WTC11 (cell line): ENCODE measurements at regions of chr3 and their contacts with region 1.

Region 1: GRCh38 chr3:113838631-113839209 is at the start of gene GRAMD1C:
- DNase-seq: peak; percentile 90
- ATAC-seq: peak; percentile 98
- H3K4me3 Mint-ChIP-seq: peak within 1 kb of the TSS; percentile 84
- H3K27ac Mint-ChIP-seq: peak within 1 kb of the TSS; percentile 29; the same call in 1 of the 2 replicates
- H3K4me1 Mint-ChIP-seq: peaks cover 14% of the 10 kb centered on the region
- H3K27me3 Mint-ChIP-seq: peaks cover 3% of the 10 kb centered on the region; the same call in 1 of the 2 replicates
- CTCF ChIP-seq: peak; percentile 82
- total RNA-seq, gene GRAMD1C: 2.6 to 3.5 TPM (median 2.8 TPM) in 3 replicates

Region 2: DNA sequence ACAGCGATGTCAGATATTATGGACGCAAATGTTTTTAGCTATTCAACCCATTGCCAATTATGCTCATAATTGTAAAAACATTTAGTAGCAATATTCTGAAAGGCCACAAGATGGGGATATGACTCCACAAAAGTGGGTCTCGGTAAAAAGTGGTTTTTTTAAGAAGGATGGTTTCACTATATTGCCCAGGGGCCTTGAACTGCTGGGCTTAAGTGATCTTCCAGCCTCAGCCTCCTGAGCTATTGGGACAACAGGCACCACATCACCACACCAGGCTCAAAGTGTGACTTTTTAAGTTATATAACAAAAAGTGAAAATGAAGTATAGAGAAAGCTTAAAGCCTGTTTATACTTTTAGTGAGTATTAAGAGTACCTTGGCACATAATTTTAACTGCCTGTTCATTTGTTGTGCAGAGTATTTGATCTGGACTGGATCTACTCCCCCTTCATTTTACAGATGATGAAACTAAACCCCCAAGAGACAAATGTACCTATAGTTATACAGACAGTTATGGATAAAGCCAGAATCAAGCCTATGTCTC is 102.1 kb before region 1 on chr3:
- CTCF ChIA-PET with region 1: interaction called, 11 read pairs
- POLR2A ChIA-PET with region 1: no interaction called
- DNase-seq: no peak
- ATAC-seq: peak; percentile 72
- H3K4me3 Mint-ChIP-seq: no peak overlapping the region
- H3K27ac Mint-ChIP-seq: peak overlapping the region; percentile 85
- H3K4me1 Mint-ChIP-seq: peaks cover 78% of the 10 kb centered on the region
- H3K27me3 Mint-ChIP-seq: no peaks in the 10 kb centered on the region
- CTCF ChIP-seq: peak; percentile 34; the same call in 1 of the 2 replicates